ENCODE measurements at regions of chr12 and their contacts with region 1.

Region 1: DNA sequence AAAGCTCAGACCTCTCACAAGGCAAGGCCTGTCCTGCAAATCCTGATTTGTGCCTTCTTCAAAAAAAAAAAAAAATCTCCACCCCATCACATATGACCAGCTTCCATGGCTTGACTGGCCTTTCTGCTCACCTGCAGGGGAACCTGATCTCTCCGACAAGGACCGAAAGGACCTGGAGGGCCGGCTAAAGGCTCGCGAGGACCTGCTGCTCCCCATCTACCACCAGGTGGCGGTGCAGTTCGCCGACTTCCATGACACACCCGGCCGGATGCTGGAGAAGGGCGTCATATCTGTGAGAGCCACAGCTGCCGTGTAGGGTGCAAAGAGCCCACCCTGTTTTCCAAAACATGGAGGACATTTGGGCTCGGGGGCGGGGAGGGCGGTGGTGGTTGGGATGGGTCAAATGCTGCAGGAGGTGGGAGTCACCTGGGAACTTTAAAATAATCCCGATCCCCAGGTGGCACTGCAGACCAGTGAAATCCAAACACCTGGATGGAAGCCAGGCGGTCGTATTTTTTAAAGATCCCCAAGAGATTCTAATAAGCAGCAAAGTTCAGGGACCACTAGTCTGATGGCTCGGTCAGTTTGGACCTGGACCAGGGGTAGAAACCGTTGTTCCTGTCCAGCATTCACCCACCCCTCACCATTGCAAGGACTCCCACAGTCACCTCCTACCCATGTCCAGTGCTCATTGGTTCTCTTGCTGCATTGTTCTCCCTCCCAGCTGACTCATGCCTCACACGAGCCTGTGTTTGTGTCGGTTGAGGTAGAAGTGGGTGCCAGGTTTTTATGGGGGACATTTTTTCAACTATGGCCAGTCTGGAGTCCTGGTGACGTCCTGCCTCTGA is 44.8 kb downstream of the FOXN4 start:
- DNase-seq: peak in 1 of 2 donors; percentile 68
- ATAC-seq: peak in 1 of 2 donors; percentile 34
- H3K4me3 ChIP-seq: no peak overlapping the region
- H3K27ac ChIP-seq: peak overlapping the region; percentile 20 to 64 (median 44)
- H3K4me1 ChIP-seq: no peaks in the 10 kb centered on the region
- H3K27me3 ChIP-seq: no peaks in the 10 kb centered on the region
- CTCF ChIP-seq: peak; percentile 58 to 77 (median 67)
- POLR2A ChIP-seq: no peak

Region 2: GRCh38 chr12:109239179-109239578 is 25.1 kb before region 1 on chr12:
- in situ Hi-C with region 1: no loop called
- intact Hi-C with region 1: no loop called
- DNase-seq: no peak
- ATAC-seq: no peak
- H3K4me3 ChIP-seq: no peak overlapping the region
- H3K27ac ChIP-seq: peak overlapping the region in 2 of 4 donors; percentile 3 to 4
- H3K4me1 ChIP-seq: no peaks in the 10 kb centered on the region
- H3K27me3 ChIP-seq: no peaks in the 10 kb centered on the region
- CTCF ChIP-seq: no peak
- POLR2A ChIP-seq: no peak

Region 3: GRCh38 chr12:109385339-109386067 is 121.2 kb after region 1 on chr12:
- in situ Hi-C with region 1: loop called in 3 of 4 experiments (anchors 10 to 25 kb)
- intact Hi-C with region 1: no loop called
- DNase-seq: peak in 1 of 2 donors; percentile 36
- ATAC-seq: peak; percentile 67 to 81
- H3K4me3 ChIP-seq: no peak overlapping the region
- H3K27ac ChIP-seq: no peak overlapping the region
- H3K4me1 ChIP-seq: no peaks in the 10 kb centered on the region
- H3K27me3 ChIP-seq: no peaks in the 10 kb centered on the region
- CTCF ChIP-seq: peak in 3 of 5 experiments; percentile 25 to 38 (median 28)
- POLR2A ChIP-seq: no peak

Region 4: GRCh38 chr12:109393437-109394345 is 129.4 kb after region 1 on chr12:
- in situ Hi-C with region 1: loop called in 3 of 4 experiments (anchors 10 to 25 kb)
- intact Hi-C with region 1: no loop called
- DNase-seq: peak in 1 of 2 donors; percentile 22
- ATAC-seq: peak; percentile 72 to 75
- H3K4me3 ChIP-seq: no peak overlapping the region
- H3K27ac ChIP-seq: no peak overlapping the region
- H3K4me1 ChIP-seq: no peaks in the 10 kb centered on the region
- H3K27me3 ChIP-seq: no peaks in the 10 kb centered on the region
- CTCF ChIP-seq: peak; percentile 55 to 88 (median 59)
- POLR2A ChIP-seq: no peak